ENCODE measurements at regions of chr2 and their contacts with region 1.

Region 1: GRCh38 chr2:189633392-189633811 is 27.9 kb upstream of the ASNSD1 start:
- DNase-seq: no peak

Region 2: GRCh38 chr2:189466660-189467059 is 166.7 kb before region 1 on chr2:
- in situ Hi-C with region 1: loop called (anchors 25 kb)
- DNase-seq: no peak